ENCODE measurements at regions of chr2 and their contacts with region 1.

Region 1: GRCh38 chr2:88723193-88723592 is 31.7 kb downstream of the RPIA start:
- DNase-seq: no peak
- H3K4me3 ChIP-seq: no peak overlapping the region
- H3K27ac ChIP-seq: no peak overlapping the region
- H3K4me1 ChIP-seq: no peaks in the 10 kb centered on the region
- CTCF ChIP-seq: no peak

Region 2: DNA sequence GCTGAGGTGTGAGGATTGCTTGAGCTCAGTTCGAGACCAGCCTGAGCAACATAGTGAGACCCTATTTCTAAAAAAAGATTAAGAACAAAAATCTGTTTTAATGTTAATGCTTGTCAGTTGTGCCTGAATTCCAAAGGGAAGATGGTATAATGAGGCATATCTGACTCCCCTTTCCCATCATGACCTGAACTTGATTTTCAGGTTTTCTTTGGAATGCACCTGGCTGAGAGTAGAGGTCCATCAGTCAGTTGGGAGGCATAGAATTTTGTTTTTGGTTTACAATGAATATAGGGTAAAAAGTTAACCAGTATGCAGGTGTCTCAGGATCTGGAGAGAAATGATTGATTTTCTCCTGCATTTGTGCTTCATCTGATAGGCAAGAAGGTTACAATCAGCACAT is 11.3 kb before region 1 on chr2:
- CTCF ChIA-PET with region 1: no interaction called
- POLR2A ChIA-PET with region 1: interaction called, 10 read pairs
- intact Hi-C with region 1: no loop called
- DNase-seq: no peak
- H3K4me3 ChIP-seq: no peak overlapping the region
- H3K27ac ChIP-seq: no peak overlapping the region
- H3K4me1 ChIP-seq: no peaks in the 10 kb centered on the region
- CTCF ChIP-seq: no peak

Region 3: GRCh38 chr2:88746929-88747490 is 23.8 kb after region 1 on chr2:
- CTCF ChIA-PET with region 1: no interaction called
- POLR2A ChIA-PET with region 1: no interaction called
- intact Hi-C with region 1: no loop called
- DNase-seq: no peak
- H3K4me3 ChIP-seq: no peak overlapping the region
- H3K27ac ChIP-seq: peak overlapping the region; percentile 96
- H3K4me1 ChIP-seq: peaks cover 55% of the 10 kb centered on the region
- CTCF ChIP-seq: no peak

Region 4: DNA sequence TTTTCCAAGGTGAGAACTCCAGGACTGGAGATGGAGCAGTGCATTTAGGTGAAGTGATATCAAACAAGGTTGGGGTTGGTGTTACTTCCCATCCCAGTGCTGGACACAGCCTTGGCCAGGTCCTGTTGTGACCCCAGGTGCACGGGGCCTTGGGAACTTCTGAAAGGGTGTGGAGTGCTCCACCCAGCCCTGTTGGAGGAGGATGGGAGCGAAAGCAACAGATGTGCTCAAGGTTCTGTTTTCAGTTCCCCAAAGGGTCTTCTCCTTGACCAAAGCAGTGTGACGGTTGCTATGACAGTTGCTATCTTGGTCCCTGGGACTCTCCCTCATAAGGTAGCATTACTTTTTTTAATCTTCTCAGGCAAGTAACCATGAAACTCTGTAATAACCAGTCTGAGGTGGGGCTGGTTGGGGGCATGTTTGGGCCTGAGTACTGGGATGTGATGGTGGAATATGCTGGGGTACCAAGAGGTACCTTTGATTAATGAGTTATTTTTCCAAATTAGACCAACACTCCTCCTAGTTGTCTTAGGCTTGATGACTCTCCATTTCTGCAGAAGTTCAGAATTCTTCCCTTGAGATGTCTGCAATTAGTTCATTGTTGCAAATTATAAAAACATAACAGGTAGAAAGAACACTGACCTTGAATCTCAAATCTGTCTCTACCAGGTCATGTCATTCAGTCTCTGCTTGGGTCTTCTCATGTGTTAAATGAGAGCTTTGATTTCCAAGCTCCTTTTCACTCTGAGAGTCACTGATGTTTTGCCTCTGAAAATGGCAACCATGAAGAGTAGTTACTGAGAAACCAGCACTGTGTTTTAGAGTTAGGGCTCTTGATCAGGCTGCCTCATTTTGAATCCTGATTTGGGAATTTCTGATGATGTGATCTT is 122.8 kb after region 1 on chr2:
- CTCF ChIA-PET with region 1: no interaction called
- POLR2A ChIA-PET with region 1: no interaction called
- intact Hi-C with region 1: no loop called
- DNase-seq: peak; percentile 99
- H3K4me3 ChIP-seq: peak overlapping the region; percentile 38
- H3K27ac ChIP-seq: peak overlapping the region; percentile 100
- H3K4me1 ChIP-seq: peaks cover 99% of the 10 kb centered on the region
- CTCF ChIP-seq: no peak